ENCODE measurements at regions of chr5 and their contacts with region 1.

Region 1: DNA sequence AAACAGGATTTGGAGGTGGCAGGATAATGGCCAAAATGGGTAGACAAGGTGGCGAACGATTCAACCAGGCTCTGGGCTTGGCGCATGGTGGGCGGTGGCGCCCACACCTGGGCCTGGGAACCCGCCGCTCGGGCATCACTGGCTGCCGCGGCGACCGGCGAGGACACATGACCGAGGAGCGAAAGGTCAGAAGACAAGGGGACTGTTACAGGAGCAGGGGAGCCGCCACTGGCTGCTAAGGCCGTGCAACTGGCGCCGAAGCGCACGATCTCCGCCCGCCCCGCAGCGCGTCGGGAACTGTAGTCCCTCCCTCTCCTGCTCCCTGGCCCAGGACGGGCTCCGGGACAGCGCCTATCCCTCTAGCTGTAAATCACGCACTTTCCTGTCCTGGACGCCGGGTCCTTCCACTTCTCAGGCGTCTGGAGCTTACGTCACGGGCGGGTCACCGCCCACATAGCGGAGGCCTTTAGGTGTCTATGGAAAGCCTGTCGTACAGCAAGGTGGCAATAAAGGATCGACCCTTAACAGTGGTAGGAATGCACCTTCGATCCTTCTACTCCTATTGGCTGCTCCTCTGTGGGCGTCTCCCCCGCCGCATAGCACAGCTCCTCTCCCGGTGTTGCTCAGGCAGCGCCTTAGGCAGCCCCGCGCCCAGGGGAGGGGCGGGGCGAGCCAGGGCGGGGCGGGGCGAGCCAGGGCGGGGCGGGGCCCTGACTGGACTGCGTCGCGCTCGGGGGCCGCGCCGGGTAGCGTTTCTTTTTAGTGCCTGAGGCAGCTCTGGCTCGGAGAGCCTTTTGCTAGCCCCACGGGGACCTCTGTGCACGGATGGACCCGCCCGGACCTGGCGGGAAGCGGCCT is at the start of gene ICE1:
- DNase-seq: peak; percentile 96 to 99 (median 97)
- ATAC-seq: peak; percentile 98
- H3K4me3 ChIP-seq: peak within 1 kb of the TSS; percentile 99
- H3K27ac ChIP-seq: peak within 1 kb of the TSS; percentile 100
- H3K4me1 ChIP-seq: peaks cover 18 to 24% of the 10 kb centered on the region in 2 experiments
- H3K27me3 ChIP-seq: no peaks in the 10 kb centered on the region
- CTCF ChIP-seq: no peak
- EP300 ChIP-seq: peak; percentile 37; the same call in 1 of the 2 replicates
- POLR2A ChIP-seq: peak; percentile 89
- RAD21 ChIP-seq: no peak
- polyA plus RNA-seq, gene ICE1: 4.9 to 8.5 TPM

Region 2: GRCh38 chr5:4868109-4868735 is 554.0 kb before region 1 on chr5:
- CTCF ChIA-PET with region 1: interaction called, 5 read pairs
- POLR2A ChIA-PET with region 1: interaction called, 3 read pairs
- in situ Hi-C with region 1: no loop called
- intact Hi-C with region 1: loop called (anchors 1 kb)
- DNase-seq: peak; percentile 74 to 90 (median 86)
- ATAC-seq: peak; percentile 94
- H3K4me3 ChIP-seq: no peak overlapping the region
- H3K27ac ChIP-seq: no peak overlapping the region
- H3K4me1 ChIP-seq: no peaks in the 10 kb centered on the region
- H3K27me3 ChIP-seq: peaks cover 2 to 8% of the 10 kb centered on the region in 2 experiments; a peak in 3 of 5 replicates
- CTCF ChIP-seq: peak; percentile 72 to 87 (median 84)
- EP300 ChIP-seq: no peak
- POLR2A ChIP-seq: no peak
- RAD21 ChIP-seq: peak; percentile 42 to 69

Region 3: GRCh38 chr5:4879693-4880303 is 542.4 kb before region 1 on chr5:
- CTCF ChIA-PET with region 1: interaction called, 6 read pairs
- POLR2A ChIA-PET with region 1: no interaction called
- in situ Hi-C with region 1: loop called (anchors 25 kb)
- intact Hi-C with region 1: loop called (anchors 1 kb)
- DNase-seq: peak; percentile 74 to 82 (median 78)
- ATAC-seq: peak; percentile 95
- H3K4me3 ChIP-seq: no peak overlapping the region
- H3K27ac ChIP-seq: no peak overlapping the region
- H3K4me1 ChIP-seq: peaks cover 0 to 3% of the 10 kb centered on the region in 2 experiments; a peak in 1 of 5 replicates
- H3K27me3 ChIP-seq: peaks cover 0 to 11% of the 10 kb centered on the region in 2 experiments; a peak in 2 of 5 replicates
- CTCF ChIP-seq: peak; percentile 88 to 98 (median 92)
- EP300 ChIP-seq: no peak
- POLR2A ChIP-seq: no peak
- RAD21 ChIP-seq: peak; percentile 86 to 94

Region 4: GRCh38 chr5:5141625-5142532 is 280.3 kb before region 1 on chr5:
- CTCF ChIA-PET with region 1: interaction called, 26 read pairs
- POLR2A ChIA-PET with region 1: no interaction called
- in situ Hi-C with region 1: no loop called
- intact Hi-C with region 1: loop called (anchors 1 kb)
- DNase-seq: peak; percentile 53 to 78 (median 62)
- ATAC-seq: peak; percentile 85
- H3K4me3 ChIP-seq: no peak overlapping the region
- H3K27ac ChIP-seq: no peak overlapping the region
- H3K4me1 ChIP-seq: peaks cover 0 to 6% of the 10 kb centered on the region in 2 experiments; a peak in 1 of 5 replicates
- H3K27me3 ChIP-seq: peaks cover 7 to 16% of the 10 kb centered on the region in 2 experiments; a peak in 4 of 5 replicates
- CTCF ChIP-seq: peak; percentile 48 to 87 (median 61); a peak in 5 of 6 replicates
- EP300 ChIP-seq: no peak
- POLR2A ChIP-seq: no peak
- RAD21 ChIP-seq: peak; percentile 82 to 89

Region 5: GRCh38 chr5:5291357-5291756 is 130.8 kb before region 1 on chr5:
- CTCF ChIA-PET with region 1: interaction called, 3 read pairs
- POLR2A ChIA-PET with region 1: no interaction called
- in situ Hi-C with region 1: no loop called
- intact Hi-C with region 1: loop called (anchors 5 kb)
- DNase-seq: no peak
- ATAC-seq: no peak
- H3K4me3 ChIP-seq: no peak overlapping the region
- H3K27ac ChIP-seq: no peak overlapping the region
- H3K4me1 ChIP-seq: no peaks in the 10 kb centered on the region
- H3K27me3 ChIP-seq: peaks cover 7 to 20% of the 10 kb centered on the region in 2 experiments; a peak in 3 of 5 replicates
- CTCF ChIP-seq: no peak
- EP300 ChIP-seq: no peak
- POLR2A ChIP-seq: no peak
- RAD21 ChIP-seq: no peak

Region 6: GRCh38 chr5:5705010-5705409 is 282.8 kb after region 1 on chr5:
- CTCF ChIA-PET with region 1: no interaction called
- POLR2A ChIA-PET with region 1: no interaction called
- in situ Hi-C with region 1: no loop called
- intact Hi-C with region 1: no loop called
- DNase-seq: no peak
- ATAC-seq: no peak; the same call in 2 of the 3 replicates
- H3K4me3 ChIP-seq: no peak overlapping the region
- H3K27ac ChIP-seq: no peak overlapping the region
- H3K4me1 ChIP-seq: no peaks in the 10 kb centered on the region
- H3K27me3 ChIP-seq: peaks cover 0 to 4% of the 10 kb centered on the region in 2 experiments; a peak in 2 of 5 replicates
- CTCF ChIP-seq: no peak
- EP300 ChIP-seq: no peak
- POLR2A ChIP-seq: no peak
- RAD21 ChIP-seq: no peak

Measured in K562 (cell line).